Activated naive CD4-positive, alpha-beta T cell treated with anti-CD3 and anti-CD28 coated beads, Interleukin-2, amount 10 ng/mL, durations not matched to agents 7 days and 5 days (primary cell): ENCODE measurements at regions of chr22 and their contacts with region 1.

Region 1: DNA sequence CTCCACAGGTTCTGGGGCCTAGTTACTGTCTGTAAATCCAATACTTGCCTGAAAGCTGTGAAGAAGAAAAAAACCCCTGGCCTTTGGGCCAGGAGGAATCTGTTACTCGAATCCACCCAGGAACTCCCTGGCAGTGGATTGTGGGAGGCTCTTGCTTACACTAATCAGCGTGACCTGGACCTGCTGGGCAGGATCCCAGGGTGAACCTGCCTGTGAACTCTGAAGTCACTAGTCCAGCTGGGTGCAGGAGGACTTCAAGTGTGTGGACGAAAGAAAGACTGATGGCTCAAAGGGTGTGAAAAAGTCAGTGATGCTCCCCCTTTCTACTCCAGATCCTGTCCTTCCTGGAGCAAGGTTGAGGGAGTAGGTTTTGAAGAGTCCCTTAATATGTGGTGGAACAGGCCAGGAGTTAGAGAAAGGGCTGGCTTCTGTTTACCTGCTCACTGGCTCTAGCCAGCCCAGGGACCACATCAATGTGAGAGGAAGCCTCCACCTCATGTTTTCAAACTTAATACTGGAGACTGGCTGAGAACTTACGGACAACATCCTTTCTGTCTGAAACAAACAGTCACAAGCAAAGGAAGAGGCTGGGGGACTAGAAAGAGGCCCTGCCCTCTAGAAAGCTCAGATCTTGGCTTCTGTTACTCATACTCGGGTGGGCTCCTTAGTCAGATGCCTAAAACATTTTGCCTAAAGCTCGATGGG is 13.5 kb downstream of the PIK3IP1 start:
- DNase-seq: peak; percentile 77
- H3K4me3 Mint-ChIP-seq: peak overlapping the region; percentile 38
- H3K27ac Mint-ChIP-seq: peak overlapping the region; percentile 98
- H3K4me1 Mint-ChIP-seq: peaks cover 72% of the 10 kb centered on the region
- H3K27me3 Mint-ChIP-seq: no peaks in the 10 kb centered on the region

Region 2: GRCh38 chr22:31290494-31291471 is 12.0 kb after region 1 on chr22:
- CTCF ChIA-PET with region 1: interaction called, 29 read pairs
- DNase-seq: peak; percentile 97
- H3K4me3 Mint-ChIP-seq: peak overlapping the region; percentile 99
- H3K27ac Mint-ChIP-seq: peak overlapping the region; percentile 99
- H3K4me1 Mint-ChIP-seq: peaks cover 72% of the 10 kb centered on the region
- H3K27me3 Mint-ChIP-seq: peaks cover 4% of the 10 kb centered on the region